HCT116 (cell line): ENCODE measurements at regions of chr12 and their contacts with region 1.

Region 1: DNA sequence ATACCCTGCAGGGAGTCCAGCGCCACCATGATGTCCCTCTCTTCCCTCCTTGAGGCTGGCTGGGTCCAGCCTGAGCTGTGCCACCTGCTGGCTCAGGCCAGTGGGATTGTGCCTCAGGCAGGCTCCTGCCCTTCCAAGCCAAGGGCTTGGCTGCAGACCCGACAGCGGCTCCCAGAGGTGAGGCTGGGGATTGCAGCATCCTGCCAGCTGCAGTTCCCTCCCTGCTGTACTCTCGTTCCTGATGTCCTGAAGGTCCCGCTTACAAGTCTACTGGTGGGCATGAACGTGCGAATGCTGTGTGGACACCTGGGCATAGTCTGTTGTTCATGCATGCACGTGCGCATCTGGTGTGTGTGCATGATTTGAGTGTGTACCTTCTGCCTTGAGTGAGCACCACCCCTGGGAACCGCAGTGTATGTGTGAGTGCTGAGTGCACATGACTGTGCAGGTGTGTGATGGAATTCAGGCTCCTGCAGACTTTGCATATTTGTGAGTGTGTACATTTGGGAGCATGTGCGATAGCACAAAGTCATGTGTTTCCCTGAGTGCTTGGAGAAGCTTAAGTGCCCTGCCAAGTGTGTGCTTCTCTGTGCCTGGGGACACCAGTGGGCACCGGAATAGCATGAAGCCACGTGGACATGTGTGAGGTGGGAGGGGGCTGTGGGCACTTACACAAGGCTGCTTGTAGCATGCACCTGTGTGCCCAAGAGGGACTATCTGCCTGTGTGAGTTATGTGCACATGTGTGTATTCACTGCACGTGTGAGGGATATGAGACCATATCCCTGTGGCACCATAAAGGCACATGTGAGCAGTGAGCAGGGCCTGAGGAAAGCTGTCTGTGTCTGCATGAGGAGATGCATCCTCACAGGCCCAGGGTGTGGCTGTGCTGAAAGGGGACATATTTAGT is 19.3 kb upstream of the KRT7 start:
- DNase-seq: peak; percentile 82
- ATAC-seq: peak; percentile 80
- H3K4me3 ChIP-seq: no peak overlapping the region
- H3K27ac ChIP-seq: no peak overlapping the region
- H3K4me1 ChIP-seq: peaks cover 51 to 77% of the 10 kb centered on the region in 2 experiments
- H3K27me3 ChIP-seq: peaks cover 3% of the 10 kb centered on the region
- CTCF ChIP-seq: peak in 2 of 3 experiments; percentile 99 to 100; a peak in 4 of 6 replicates
- POLR2A ChIP-seq: no peak
- RAD21 ChIP-seq: no peak

Region 2: GRCh38 chr12:50211392-50212070 is 2002.2 kb before region 1 on chr12:
- CTCF ChIA-PET with region 1: no interaction called
- POLR2A ChIA-PET with region 1: no interaction called
- RAD21 ChIA-PET with region 1: no interaction called
- intact Hi-C with region 1: no loop called
- DNase-seq: no peak
- ATAC-seq: 0 out of 2 replicates have a peak, but pooled peaks have one; percentile 30
- H3K4me3 ChIP-seq: no peak overlapping the region
- H3K27ac ChIP-seq: no peak overlapping the region
- H3K4me1 ChIP-seq: peaks cover 14 to 74% of the 10 kb centered on the region in 2 experiments
- H3K27me3 ChIP-seq: no peaks in the 10 kb centered on the region
- CTCF ChIP-seq: 0 out of 6 replicates have a peak, but pooled peaks of 1 of the 3 experiments have one; percentile 4
- POLR2A ChIP-seq: no peak
- RAD21 ChIP-seq: peak; percentile 33

Region 3: GRCh38 chr12:52052464-52053186 is 161.1 kb before region 1 on chr12:
- CTCF ChIA-PET with region 1: no interaction called
- POLR2A ChIA-PET with region 1: no interaction called
- RAD21 ChIA-PET with region 1: no interaction called
- intact Hi-C with region 1: no loop called
- DNase-seq: no peak
- ATAC-seq: no peak
- H3K4me3 ChIP-seq: peak overlapping the region; percentile 62 to 86
- H3K27ac ChIP-seq: no peak overlapping the region; the same call in 1 of the 2 replicates
- H3K4me1 ChIP-seq: peaks cover 22 to 43% of the 10 kb centered on the region in 2 experiments
- H3K27me3 ChIP-seq: no peaks in the 10 kb centered on the region
- CTCF ChIP-seq: no peak
- POLR2A ChIP-seq: no peak
- RAD21 ChIP-seq: no peak

Region 4: GRCh38 chr12:52171950-52172512 is 41.7 kb before region 1 on chr12:
- CTCF ChIA-PET with region 1: interaction called, 17 read pairs
- POLR2A ChIA-PET with region 1: no interaction called
- RAD21 ChIA-PET with region 1: interaction called, 3 read pairs
- intact Hi-C with region 1: no loop called
- DNase-seq: no peak
- ATAC-seq: peak; percentile 81
- H3K4me3 ChIP-seq: no peak overlapping the region
- H3K27ac ChIP-seq: no peak overlapping the region
- H3K4me1 ChIP-seq: peaks cover 15 to 46% of the 10 kb centered on the region in 2 experiments
- H3K27me3 ChIP-seq: no peaks in the 10 kb centered on the region
- CTCF ChIP-seq: peak; percentile 78 to 90 (median 82)
- POLR2A ChIP-seq: no peak
- RAD21 ChIP-seq: peak; percentile 80

Region 5: GRCh38 chr12:52192173-52192791 is 21.5 kb before region 1 on chr12:
- CTCF ChIA-PET with region 1: interaction called, 15 read pairs
- POLR2A ChIA-PET with region 1: interaction called, 4 read pairs
- RAD21 ChIA-PET with region 1: interaction called in 1 of 2 experiments, 4 read pairs
- intact Hi-C with region 1: no loop called
- DNase-seq: peak; percentile 97
- ATAC-seq: peak; percentile 88
- H3K4me3 ChIP-seq: peak overlapping the region; percentile 39 to 52; a peak in 3 of 4 replicates
- H3K27ac ChIP-seq: peak overlapping the region; percentile 62
- H3K4me1 ChIP-seq: peaks cover 54 to 85% of the 10 kb centered on the region in 2 experiments
- H3K27me3 ChIP-seq: no peaks in the 10 kb centered on the region; the same call in 1 of the 2 replicates
- CTCF ChIP-seq: no peak
- POLR2A ChIP-seq: no peak
- RAD21 ChIP-seq: no peak

Region 6: DNA sequence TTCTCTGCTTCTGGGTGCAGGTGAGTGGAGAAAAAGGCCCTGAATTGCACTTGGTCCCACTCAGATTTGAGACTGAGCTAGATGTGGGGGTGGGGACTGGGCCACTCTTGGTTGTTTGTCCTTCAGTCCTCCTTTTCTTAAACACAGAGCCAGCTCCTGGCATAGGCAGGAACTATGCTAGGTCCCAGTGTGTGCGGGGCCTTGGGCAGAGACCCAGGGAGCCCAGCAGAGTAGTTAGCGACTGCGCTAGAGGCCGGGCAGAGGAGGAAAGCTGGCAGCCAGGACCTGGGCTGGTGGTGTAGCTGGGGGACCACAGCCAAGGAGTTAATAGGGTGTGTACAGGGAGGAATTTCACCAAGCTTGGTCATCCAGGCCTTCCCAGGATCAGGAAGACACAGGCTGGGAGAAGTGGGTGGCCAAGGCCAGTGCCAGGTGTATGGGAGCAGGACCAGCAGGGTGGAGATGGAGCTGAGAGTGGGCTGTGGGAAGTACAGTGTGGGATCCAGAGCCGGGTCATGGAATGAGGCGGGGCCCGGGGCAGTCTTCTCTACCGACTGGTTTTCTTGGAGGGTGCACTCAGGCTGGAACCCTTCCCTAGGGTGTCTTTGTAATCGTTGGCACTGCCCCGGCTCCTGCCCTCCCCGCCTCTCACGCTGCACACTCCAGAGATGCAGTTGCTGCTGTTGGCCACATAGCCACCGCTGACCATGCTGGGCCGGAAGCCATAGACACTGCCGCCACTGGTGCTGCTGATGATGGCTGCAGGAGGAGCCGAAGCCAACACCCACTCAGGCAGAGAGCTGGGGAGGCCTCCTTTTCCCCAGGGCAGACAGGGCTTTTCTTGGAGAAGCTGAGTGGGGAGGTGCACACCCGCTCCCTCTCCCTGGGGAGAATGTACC is 330.5 kb after region 1 on chr12:
- CTCF ChIA-PET with region 1: no interaction called
- POLR2A ChIA-PET with region 1: no interaction called
- RAD21 ChIA-PET with region 1: no interaction called
- intact Hi-C with region 1: no loop called
- DNase-seq: no peak
- ATAC-seq: peak; percentile 70
- H3K4me3 ChIP-seq: no peak overlapping the region
- H3K27ac ChIP-seq: no peak overlapping the region
- H3K4me1 ChIP-seq: peaks cover 3 to 13% of the 10 kb centered on the region in 2 experiments; a peak in 3 of 4 replicates
- H3K27me3 ChIP-seq: no peaks in the 10 kb centered on the region
- CTCF ChIP-seq: peak in 1 of 3 experiments; percentile 10; a peak in 1 of 6 replicates
- POLR2A ChIP-seq: no peak
- RAD21 ChIP-seq: no peak

Region 7: DNA sequence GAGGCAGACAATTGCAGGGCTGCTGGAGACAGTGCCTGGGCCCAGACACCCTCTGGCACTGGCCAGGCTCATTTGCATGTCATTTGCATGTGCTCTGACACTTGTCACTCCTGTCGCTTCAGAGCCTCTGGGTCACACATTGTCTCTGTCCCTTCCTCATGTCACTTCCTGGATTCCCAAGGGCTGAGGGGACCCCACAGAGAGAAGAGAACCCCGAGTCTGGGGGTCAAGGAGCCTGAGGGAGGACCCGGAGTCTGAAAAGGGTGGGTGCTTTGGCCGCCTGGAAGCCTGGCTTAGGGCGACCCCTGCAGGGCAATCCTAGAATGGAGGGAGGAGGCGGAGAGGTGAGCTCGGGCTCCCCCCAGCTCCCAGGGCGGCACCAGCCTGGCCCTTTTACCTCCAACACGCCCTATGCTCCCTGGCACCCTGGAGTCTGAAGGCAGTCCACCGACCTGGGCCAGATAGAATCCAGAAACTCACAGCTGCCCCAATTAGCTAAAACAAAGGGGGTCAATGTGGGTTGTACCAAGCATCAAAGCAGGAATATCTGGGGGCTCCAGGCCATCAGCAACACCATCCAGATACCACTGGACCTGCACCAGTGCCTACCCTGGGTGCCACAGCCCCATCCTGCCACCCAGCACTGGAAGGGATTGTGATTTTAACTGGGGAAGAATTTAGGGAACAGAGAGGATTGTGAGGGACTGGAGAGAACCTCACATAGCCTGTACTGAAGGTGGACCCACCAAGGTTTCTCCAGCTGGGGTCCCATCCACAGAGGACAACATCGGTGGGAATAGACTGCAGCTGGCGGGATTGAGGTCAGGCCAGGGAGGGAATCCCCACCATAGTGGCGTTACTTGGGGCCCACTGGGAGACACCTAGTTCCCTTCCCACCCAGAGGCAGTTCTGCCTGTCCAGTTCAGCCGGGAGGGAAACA is 656.9 kb after region 1 on chr12:
- CTCF ChIA-PET with region 1: no interaction called
- POLR2A ChIA-PET with region 1: no interaction called
- RAD21 ChIA-PET with region 1: no interaction called
- intact Hi-C with region 1: loop called (anchors 5 kb)
- DNase-seq: no peak
- ATAC-seq: peak; percentile 71
- H3K4me3 ChIP-seq: 0 out of 4 replicates have a peak overlapping the region, but pooled peaks of 1 of the 2 experiments have one; percentile 16
- H3K27ac ChIP-seq: peak overlapping the region; percentile 81
- H3K4me1 ChIP-seq: peaks cover 48 to 64% of the 10 kb centered on the region in 2 experiments
- H3K27me3 ChIP-seq: no peaks in the 10 kb centered on the region
- CTCF ChIP-seq: peak in 2 of 3 experiments; percentile 89 to 96; a peak in 4 of 6 replicates
- POLR2A ChIP-seq: no peak
- RAD21 ChIP-seq: no peak